Left lung (tissue), 14 donors: ENCODE measurements at regions of chr5 and their contacts with region 1.

Region 1: GRCh38 chr5:134140530-134141201 is 26.2 kb downstream of the TCF7 start:
- DNase-seq: peak in 2 of 4 donors; percentile 47 to 52
- ATAC-seq: peak; percentile 80
- H3K4me3 ChIP-seq: no peak overlapping the region
- H3K27ac ChIP-seq: no peak overlapping the region
- H3K4me1 ChIP-seq: peaks cover 0 to 25% of the 10 kb centered on the region in 2 donors
- H3K27me3 ChIP-seq: no peaks in the 10 kb centered on the region
- CTCF ChIP-seq: peak; percentile 71 to 81

Region 2: GRCh38 chr5:134041570-134042411 is 98.9 kb before region 1 on chr5:
- intact Hi-C with region 1: loop called in 1 of 2 experiments (anchors 5 kb)
- DNase-seq: no peak
- ATAC-seq: no peak
- H3K4me3 ChIP-seq: no peak overlapping the region
- H3K27ac ChIP-seq: no peak overlapping the region
- H3K4me1 ChIP-seq: no peaks in the 10 kb centered on the region
- H3K27me3 ChIP-seq: no peaks in the 10 kb centered on the region
- CTCF ChIP-seq: no peak

Region 3: GRCh38 chr5:134101686-134102439 is 38.8 kb before region 1 on chr5:
- intact Hi-C with region 1: loop called in 1 of 2 experiments (anchors 5 kb)
- DNase-seq: peak in 3 of 4 donors; percentile 43 to 91 (median 58)
- ATAC-seq: peak; percentile 83
- H3K4me3 ChIP-seq: no peak overlapping the region
- H3K27ac ChIP-seq: no peak overlapping the region
- H3K4me1 ChIP-seq: peaks cover 0 to 3% of the 10 kb centered on the region in 2 donors
- H3K27me3 ChIP-seq: no peaks in the 10 kb centered on the region
- CTCF ChIP-seq: peak; percentile 86 to 90